Dendritic cell treated with granulocyte-macrophage colony-stimulating factor and Interleukin-4, amounts not matched to agents 40 ng/mL and 50 ng/mL, for 4 days (primary cell): ENCODE measurements at regions of chr3 and their contacts with region 1.

Region 1: DNA sequence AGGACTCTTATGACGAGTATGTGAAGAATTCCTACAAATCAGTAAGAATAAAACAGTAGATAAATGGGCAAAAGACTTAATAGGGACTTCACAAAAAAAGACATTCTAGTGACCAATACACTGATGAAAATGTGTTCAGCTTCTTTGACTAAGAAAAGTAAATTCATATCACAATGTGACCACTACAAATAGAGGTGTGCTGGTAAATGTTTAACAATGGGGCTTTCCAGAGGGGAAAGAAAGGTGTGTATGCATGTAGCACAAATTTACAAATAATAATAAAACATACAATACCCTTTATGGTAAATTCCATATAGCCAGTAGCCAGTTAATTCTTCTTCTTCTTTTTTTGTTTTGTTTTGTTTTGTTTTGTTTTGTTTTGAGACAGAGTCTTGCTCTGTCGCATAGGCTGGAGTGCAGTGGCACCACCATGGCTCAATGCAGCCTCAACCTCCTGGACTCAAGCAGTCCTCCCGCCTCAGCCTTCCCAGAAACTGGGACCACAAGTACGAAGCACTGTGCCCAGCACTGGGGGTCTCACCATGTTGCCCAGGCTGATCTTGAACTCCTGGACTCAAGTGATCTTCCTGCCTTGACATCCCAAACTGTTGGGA is 17.5 kb upstream of the NMD3 start:
- H3K4me3 Mint-ChIP-seq: no peak overlapping the region
- H3K27ac Mint-ChIP-seq: no peak overlapping the region
- H3K4me1 Mint-ChIP-seq: peaks cover 9% of the 10 kb centered on the region
- H3K27me3 Mint-ChIP-seq: no peaks in the 10 kb centered on the region

Region 2: GRCh38 chr3:160904691-160905090 is 298.9 kb before region 1 on chr3:
- intact Hi-C with region 1: no loop called
- H3K4me3 Mint-ChIP-seq: no peak overlapping the region
- H3K27ac Mint-ChIP-seq: no peak overlapping the region
- H3K4me1 Mint-ChIP-seq: peaks cover 21% of the 10 kb centered on the region
- H3K27me3 Mint-ChIP-seq: no peaks in the 10 kb centered on the region

Region 3: DNA sequence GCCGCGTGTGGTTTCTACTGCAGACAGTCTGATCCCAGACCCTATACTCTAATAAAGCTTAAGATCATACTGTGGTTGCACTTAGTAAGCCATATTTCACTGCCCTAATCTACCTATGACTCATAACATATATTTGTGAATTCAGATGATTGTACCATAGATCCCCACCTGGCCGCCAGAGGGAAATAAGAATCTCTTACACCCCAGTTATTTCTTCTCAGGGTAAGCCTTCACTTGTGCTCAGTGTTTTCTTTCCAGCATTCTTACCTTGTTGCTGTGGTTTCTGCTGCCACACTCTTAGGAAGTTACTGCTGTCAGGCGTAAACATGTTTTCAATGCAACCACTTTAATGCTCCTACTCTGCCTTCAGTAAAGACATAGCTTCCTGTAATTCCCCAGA is 204.3 kb before region 1 on chr3:
- intact Hi-C with region 1: no loop called
- H3K4me3 Mint-ChIP-seq: no peak overlapping the region
- H3K27ac Mint-ChIP-seq: no peak overlapping the region
- H3K4me1 Mint-ChIP-seq: peaks cover 5% of the 10 kb centered on the region
- H3K27me3 Mint-ChIP-seq: no peaks in the 10 kb centered on the region

Region 4: GRCh38 chr3:161081633-161082032 is 122.0 kb before region 1 on chr3:
- intact Hi-C with region 1: loop called (anchors 10 kb)
- H3K4me3 Mint-ChIP-seq: no peak overlapping the region
- H3K27ac Mint-ChIP-seq: peak overlapping the region; percentile 75
- H3K4me1 Mint-ChIP-seq: peaks cover 34% of the 10 kb centered on the region
- H3K27me3 Mint-ChIP-seq: no peaks in the 10 kb centered on the region

Region 5: DNA sequence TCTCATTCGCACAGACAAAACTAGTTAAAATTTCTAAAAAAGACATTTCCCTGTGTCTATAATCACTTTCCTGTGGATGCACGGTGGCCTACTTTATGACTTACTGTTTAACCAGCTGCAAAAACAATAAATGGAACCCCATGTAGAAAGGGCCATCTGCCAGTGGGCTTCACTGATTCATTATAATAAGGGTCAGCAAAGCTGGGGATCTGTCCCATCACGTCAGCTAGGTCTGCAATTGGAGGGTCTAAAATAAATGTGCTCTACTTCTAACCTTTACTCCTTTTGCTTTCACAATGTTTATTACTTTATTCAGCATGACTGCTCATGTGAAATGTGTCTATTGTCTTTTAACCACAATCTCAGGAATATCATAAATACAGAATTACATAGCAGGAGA is 25.6 kb before region 1 on chr3:
- intact Hi-C with region 1: no loop called
- H3K4me3 Mint-ChIP-seq: no peak overlapping the region
- H3K27ac Mint-ChIP-seq: no peak overlapping the region
- H3K4me1 Mint-ChIP-seq: no peaks in the 10 kb centered on the region
- H3K27me3 Mint-ChIP-seq: no peaks in the 10 kb centered on the region

Region 6: GRCh38 chr3:161444006-161444693 is 240.6 kb after region 1 on chr3:
- intact Hi-C with region 1: no loop called
- H3K4me3 Mint-ChIP-seq: no peak overlapping the region
- H3K27ac Mint-ChIP-seq: no peak overlapping the region
- H3K4me1 Mint-ChIP-seq: no peaks in the 10 kb centered on the region
- H3K27me3 Mint-ChIP-seq: peaks cover 3% of the 10 kb centered on the region